GM12878 (cell line): ENCODE measurements at regions of chr12 and their contacts with region 1.

Region 1: GRCh38 chr12:121765573-121765972 is 27.9 kb downstream of the RHOF start:
- DNase-seq: no peak
- ATAC-seq: no peak
- H3K4me3 ChIP-seq: no peak overlapping the region
- H3K27ac ChIP-seq: no peak overlapping the region
- H3K4me1 ChIP-seq: no peaks in the 10 kb centered on the region
- H3K27me3 ChIP-seq: no peaks in the 10 kb centered on the region
- CTCF ChIP-seq: no peak
- EP300 ChIP-seq: no peak
- POLR2A ChIP-seq: no peak
- RAD21 ChIP-seq: no peak

Region 2: GRCh38 chr12:121697098-121697698 is 68.4 kb before region 1 on chr12:
- CTCF ChIA-PET with region 1: interaction called, 3 read pairs
- POLR2A ChIA-PET with region 1: no interaction called
- RAD21 ChIA-PET with region 1: no interaction called
- SMC1A ChIA-PET with region 1: interaction called, 5 read pairs
- in situ Hi-C with region 1: loop called (anchors 5 kb)
- intact Hi-C with region 1: no loop called
- DNase-seq: no peak
- ATAC-seq: peak; percentile 40; the same call in 1 of the 3 replicates
- H3K4me3 ChIP-seq: no peak overlapping the region
- H3K27ac ChIP-seq: no peak overlapping the region
- H3K4me1 ChIP-seq: no peaks in the 10 kb centered on the region
- H3K27me3 ChIP-seq: no peaks in the 10 kb centered on the region
- CTCF ChIP-seq: peak in 2 of 3 experiments; percentile 35 to 60; a peak in 4 of 6 replicates
- EP300 ChIP-seq: no peak
- POLR2A ChIP-seq: no peak
- RAD21 ChIP-seq: peak; percentile 71

Region 3: DNA sequence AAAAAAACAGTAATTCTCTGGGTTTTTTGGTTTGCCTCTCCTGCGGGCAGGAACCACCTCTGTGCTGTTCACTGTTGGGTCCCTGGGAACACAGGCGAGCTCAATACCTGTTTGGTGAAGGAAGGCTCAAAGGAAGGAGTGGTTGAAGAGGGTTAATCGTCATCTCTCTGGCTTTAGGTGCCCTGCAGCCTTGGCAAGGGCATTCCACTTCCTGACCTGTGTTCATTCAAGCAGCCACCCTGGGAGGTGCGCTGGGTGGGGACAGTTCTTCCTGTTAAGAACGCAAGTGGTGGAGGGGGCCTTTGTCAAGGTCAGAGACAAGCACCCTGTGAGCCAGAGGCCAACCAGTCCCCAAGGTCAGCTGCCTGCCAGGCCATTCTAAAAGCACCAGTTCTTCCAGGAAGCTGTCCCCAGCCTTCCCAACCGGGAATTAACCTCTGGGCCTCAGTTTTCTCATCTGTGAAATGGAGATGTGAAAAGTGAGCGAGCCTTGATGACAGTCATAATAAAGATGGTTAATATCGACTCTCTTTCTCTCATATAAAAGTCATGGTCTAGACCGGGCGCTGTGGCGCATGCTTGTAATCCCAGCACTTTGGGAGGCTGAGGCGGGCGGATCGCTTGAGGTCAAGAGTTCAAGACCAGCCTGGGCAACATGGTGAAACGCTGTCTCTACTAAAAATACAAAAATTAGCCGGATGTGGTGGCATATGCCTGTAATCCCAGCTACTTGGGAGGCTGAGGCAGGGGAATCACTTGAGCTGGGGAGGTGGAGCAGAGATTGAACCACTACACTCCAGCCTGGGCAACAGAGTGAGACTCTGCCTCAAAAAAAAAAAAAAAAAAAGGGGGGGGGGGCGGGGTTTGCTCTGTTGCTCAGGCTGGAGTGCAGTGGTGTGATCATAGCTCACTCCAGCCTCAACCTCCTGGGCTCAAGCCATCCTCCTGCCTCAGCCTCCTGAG is 21.8 kb after region 1 on chr12:
- CTCF ChIA-PET with region 1: no interaction called
- POLR2A ChIA-PET with region 1: no interaction called
- RAD21 ChIA-PET with region 1: no interaction called
- SMC1A ChIA-PET with region 1: no interaction called
- in situ Hi-C with region 1: no loop called
- intact Hi-C with region 1: no loop called
- DNase-seq: no peak
- ATAC-seq: no peak
- H3K4me3 ChIP-seq: peak overlapping the region; percentile 23; the same call in 1 of the 2 replicates
- H3K27ac ChIP-seq: peak overlapping the region; percentile 90
- H3K4me1 ChIP-seq: peaks cover 82% of the 10 kb centered on the region
- H3K27me3 ChIP-seq: no peaks in the 10 kb centered on the region
- CTCF ChIP-seq: no peak
- EP300 ChIP-seq: no peak
- POLR2A ChIP-seq: no peak
- RAD21 ChIP-seq: no peak